ENCODE measurements at regions of chr7 and their contacts with region 1.

Region 1: GRCh38 chr7:100081535-100082102 is at the start of gene ZNF3:
- DNase-seq: peak; percentile 99
- ATAC-seq: peak; percentile 77
- H3K4me3 ChIP-seq: peak within 1 kb of the TSS; percentile 70 to 84 (median 79)
- H3K4me3 Mint-ChIP-seq: peak within 1 kb of the TSS; percentile 86
- H3K27ac ChIP-seq: peak within 1 kb of the TSS; percentile 81 to 91
- H3K27ac Mint-ChIP-seq: peak within 1 kb of the TSS; percentile 91
- H3K4me1 ChIP-seq: peaks cover 16 to 24% of the 10 kb centered on the region in 2 donors
- H3K4me1 Mint-ChIP-seq: peaks cover 32% of the 10 kb centered on the region
- H3K27me3 ChIP-seq: no peaks in the 10 kb centered on the region
- H3K27me3 Mint-ChIP-seq: no peaks in the 10 kb centered on the region
- CTCF ChIP-seq: peak; percentile 96
- total RNA-seq, gene ZNF3: 44.8 and 48.5 TPM in 2 replicates

Region 2: DNA sequence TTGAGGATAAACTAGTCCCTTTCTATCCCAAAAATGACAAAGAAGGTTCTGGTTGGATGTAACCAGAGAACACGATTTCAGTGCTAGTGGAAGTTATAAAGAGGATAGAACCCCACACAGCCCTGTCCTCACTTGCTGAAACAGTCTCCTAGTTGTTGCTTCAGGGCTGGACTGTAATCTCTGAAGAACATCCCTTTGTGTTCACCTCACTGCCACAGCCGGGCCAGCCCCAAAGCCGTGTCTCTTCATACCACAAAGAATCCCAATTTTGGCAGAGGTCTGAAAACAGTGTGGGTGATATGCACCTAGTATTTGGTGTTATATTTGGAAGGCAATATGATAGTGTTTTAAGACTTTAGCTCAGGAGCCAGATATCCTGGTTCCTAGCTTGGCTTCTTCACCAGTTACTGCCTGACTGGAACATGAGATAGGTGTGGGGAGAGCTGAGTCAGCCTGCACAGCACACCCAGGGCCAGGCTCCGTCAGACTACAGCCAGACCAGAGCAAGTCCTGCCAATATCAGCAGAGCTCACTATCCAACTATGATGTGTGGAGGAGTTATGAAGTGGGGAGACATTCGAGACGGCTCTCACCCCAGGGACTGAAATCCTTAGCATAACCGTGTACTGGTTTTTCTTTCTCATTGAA is 318.8 kb before region 1 on chr7:
- CTCF ChIA-PET with region 1: no interaction called
- POLR2A ChIA-PET with region 1: no interaction called
- intact Hi-C with region 1: no loop called
- DNase-seq: no peak
- ATAC-seq: no peak
- H3K4me3 ChIP-seq: no peak overlapping the region
- H3K4me3 Mint-ChIP-seq: no peak overlapping the region
- H3K27ac ChIP-seq: no peak overlapping the region
- H3K27ac Mint-ChIP-seq: no peak overlapping the region
- H3K4me1 ChIP-seq: peaks cover 6 to 8% of the 10 kb centered on the region in 2 donors
- H3K4me1 Mint-ChIP-seq: peaks cover 10% of the 10 kb centered on the region
- H3K27me3 ChIP-seq: peaks cover 0 to 58% (median 29%) of the 10 kb centered on the region in 4 experiments
- H3K27me3 Mint-ChIP-seq: peaks cover 68% of the 10 kb centered on the region
- CTCF ChIP-seq: no peak

Region 3: DNA sequence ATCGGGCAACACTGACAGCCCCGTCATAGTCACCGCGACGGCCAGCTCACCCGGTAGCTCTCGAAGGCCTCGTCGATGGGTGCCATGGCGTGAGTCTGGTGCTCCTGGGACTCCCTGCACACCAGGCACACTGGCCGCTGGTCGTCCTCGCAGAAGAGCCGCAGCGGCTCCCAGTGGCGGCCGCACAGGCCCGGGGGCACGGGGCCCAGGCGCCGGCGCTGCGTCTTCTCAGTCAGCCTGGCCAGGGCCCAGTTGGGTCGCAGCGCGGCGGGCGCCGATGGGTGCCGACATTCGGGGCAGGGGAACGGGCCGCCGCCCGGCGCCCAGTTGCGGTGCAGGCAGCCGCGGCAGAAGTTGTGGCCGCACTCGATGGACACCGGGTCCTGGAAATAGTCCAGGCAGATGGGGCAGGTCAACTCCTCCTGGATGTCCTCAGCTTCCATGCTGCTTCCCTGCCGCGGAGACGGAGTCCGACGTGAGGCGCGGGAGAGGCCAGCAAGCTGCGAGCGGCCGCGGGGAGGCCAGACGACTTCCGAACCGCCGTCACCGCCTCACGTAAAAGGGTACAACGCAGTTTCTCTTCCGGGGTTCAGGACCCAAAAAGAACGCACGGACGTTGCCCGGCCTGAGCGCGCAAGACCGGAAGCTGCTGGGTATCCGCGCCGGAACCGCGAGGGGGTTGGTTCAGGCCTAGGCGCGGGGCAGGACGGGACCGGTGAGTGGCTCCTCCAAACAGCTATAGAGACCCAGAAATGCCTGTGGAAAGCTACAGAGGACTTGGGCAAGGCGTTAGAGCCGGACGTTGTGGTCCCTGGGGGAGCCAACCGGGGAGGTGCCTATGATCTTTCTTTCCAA is 162.4 kb before region 1 on chr7 and contains the start of gene TRIM4:
- CTCF ChIA-PET with region 1: no interaction called
- POLR2A ChIA-PET with region 1: interaction called, 6 read pairs
- intact Hi-C with region 1: loop called (anchors 1 kb)
- DNase-seq: peak; percentile 92
- ATAC-seq: peak; percentile 97
- H3K4me3 ChIP-seq: peak within 1 kb of the TSS; percentile 65 to 89 (median 78)
- H3K4me3 Mint-ChIP-seq: peak within 1 kb of the TSS; percentile 96
- H3K27ac ChIP-seq: peak within 1 kb of the TSS; percentile 81 to 93
- H3K27ac Mint-ChIP-seq: peak within 1 kb of the TSS; percentile 97
- H3K4me1 ChIP-seq: peaks cover 32 to 35% of the 10 kb centered on the region in 2 donors
- H3K4me1 Mint-ChIP-seq: peaks cover 47% of the 10 kb centered on the region
- H3K27me3 ChIP-seq: no peaks in the 10 kb centered on the region
- H3K27me3 Mint-ChIP-seq: peaks cover 6% of the 10 kb centered on the region
- CTCF ChIP-seq: peak; percentile 21
- total RNA-seq, gene TRIM4: 56.7 and 58.1 TPM in 2 replicates

Region 4: DNA sequence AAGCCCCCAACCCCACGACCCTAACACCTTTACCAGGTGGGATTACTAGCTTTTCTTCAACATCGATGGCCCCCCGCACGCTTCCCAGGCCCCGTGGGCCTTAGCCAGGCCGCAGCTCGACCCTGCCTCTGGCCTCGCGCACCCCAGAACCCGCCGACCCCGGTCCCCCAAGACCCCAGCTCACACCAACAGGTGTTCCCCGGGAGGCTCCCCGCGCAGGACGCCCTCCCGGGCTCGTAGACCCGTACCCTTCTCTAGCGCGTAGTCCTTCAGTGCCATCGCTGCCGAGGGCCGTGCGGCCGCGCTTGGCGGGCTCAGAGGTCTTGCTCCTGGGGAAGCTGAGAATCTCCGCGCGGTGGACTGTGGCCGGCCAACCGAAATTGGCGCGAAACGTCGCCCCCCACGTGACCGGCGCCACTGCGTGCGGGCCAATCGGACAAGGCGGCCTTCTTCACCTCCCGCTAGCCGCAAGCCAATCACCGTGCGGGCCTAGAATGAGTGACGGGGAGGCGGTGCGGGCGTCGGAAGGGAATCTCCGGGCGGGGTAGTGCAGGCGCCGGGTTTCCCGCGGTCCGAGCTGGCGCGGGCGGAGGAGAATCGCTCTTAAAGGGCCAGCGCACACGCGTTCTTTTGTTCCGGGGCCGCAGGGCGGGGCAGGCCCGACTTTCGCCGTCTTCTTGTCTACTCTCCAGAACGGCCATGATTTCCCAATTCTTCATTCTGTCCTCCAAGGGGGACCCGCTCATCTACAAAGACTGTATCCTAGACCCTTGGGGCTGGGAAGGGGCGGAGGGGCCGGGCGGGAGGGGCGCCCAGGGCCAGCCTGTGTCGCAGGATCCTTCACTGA is 19.6 kb after region 1 on chr7 and contains the starts of genes AP4M1 and MCM7:
- CTCF ChIA-PET with region 1: interaction called, 19 read pairs
- POLR2A ChIA-PET with region 1: interaction called, 19 read pairs
- intact Hi-C with region 1: loop called (anchors 1 kb)
- DNase-seq: peak; percentile 97
- ATAC-seq: peak; percentile 86
- H3K4me3 ChIP-seq: peak within 1 kb of the TSS; percentile 85 to 92 (median 90)
- H3K4me3 Mint-ChIP-seq: peak within 1 kb of the TSS; percentile 96
- H3K27ac ChIP-seq: peak within 1 kb of the TSS; percentile 60 to 94
- H3K27ac Mint-ChIP-seq: peak within 1 kb of the TSS; percentile 98
- H3K4me1 ChIP-seq: peaks cover 13 to 24% of the 10 kb centered on the region in 2 donors
- H3K4me1 Mint-ChIP-seq: peaks cover 40% of the 10 kb centered on the region
- H3K27me3 ChIP-seq: no peaks in the 10 kb centered on the region
- H3K27me3 Mint-ChIP-seq: no peaks in the 10 kb centered on the region
- CTCF ChIP-seq: no peak
- total RNA-seq, gene AP4M1: 17.6 and 18.3 TPM in 2 replicates
- total RNA-seq, gene MCM7: 147 and 154 TPM in 2 replicates

Region 5: GRCh38 chr7:100137851-100138760 is 56.5 kb after region 1 on chr7:
- CTCF ChIA-PET with region 1: no interaction called
- POLR2A ChIA-PET with region 1: no interaction called
- intact Hi-C with region 1: no loop called
- DNase-seq: peak; percentile 55
- ATAC-seq: peak; percentile 61
- H3K4me3 ChIP-seq: peak overlapping the region in 2 of 5 experiments; percentile 15 to 20
- H3K4me3 Mint-ChIP-seq: peak overlapping the region; percentile 72
- H3K27ac ChIP-seq: peak overlapping the region in 1 of 2 donors; percentile 63
- H3K27ac Mint-ChIP-seq: peak overlapping the region; percentile 88
- H3K4me1 ChIP-seq: peaks cover 10 to 25% of the 10 kb centered on the region in 2 donors
- H3K4me1 Mint-ChIP-seq: peaks cover 18% of the 10 kb centered on the region
- H3K27me3 ChIP-seq: no peaks in the 10 kb centered on the region
- H3K27me3 Mint-ChIP-seq: no peaks in the 10 kb centered on the region
- CTCF ChIP-seq: no peak

Region 6: DNA sequence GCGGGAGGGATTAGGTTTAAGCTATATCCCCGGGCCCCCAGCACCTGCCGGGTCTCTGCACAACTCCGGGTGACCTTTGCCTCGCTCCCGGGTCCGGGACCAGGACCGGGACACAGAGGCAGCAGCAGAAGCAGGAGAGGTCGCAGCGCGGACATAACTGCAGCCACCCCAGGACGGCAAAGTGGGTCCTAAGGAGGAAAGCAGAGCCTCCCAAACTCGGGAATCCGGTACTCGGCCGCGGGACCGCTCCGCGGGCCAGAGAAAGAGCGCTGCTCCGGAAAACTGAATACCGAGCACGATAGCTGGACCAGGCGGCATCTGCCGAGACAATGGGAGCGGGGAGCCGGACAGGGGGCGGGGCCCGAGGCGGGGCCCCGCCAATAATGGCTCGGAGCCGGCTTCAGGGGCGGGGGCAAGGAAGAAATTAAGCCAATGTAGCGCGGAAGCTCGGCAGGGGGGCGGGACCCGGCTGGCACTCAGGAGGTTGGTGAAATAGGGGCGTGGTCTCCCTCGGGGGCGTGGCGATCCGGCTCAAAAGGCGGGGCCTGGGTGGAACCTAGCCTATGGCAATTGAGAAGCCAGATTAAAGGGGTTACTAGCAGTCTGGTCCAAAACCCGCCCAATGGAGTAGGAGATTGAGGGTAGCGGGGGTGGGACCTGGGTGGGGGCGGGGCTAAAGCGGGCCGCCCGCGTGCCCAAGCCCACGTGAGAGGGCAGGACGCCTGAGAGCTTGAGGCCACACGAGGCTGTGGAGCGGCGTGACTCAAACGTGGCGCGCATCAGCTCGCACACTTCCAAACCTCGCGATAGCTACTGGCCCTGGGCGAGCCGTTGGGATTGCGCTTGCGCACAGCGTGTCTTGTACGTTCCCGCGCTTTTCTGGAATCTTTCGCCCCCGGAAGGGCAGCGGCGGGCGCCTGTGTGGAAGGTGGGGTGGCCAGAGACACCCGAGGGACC is 95.7 kb after region 1 on chr7 and contains the starts of genes GPC2 and STAG3:
- CTCF ChIA-PET with region 1: no interaction called
- POLR2A ChIA-PET with region 1: no interaction called
- intact Hi-C with region 1: loop called (anchors 1 kb)
- DNase-seq: peak; percentile 97
- ATAC-seq: peak; percentile 94
- H3K4me3 ChIP-seq: peak within 1 kb of the TSS; percentile 64 to 78 (median 70)
- H3K4me3 Mint-ChIP-seq: peak within 1 kb of the TSS; percentile 73
- H3K27ac ChIP-seq: peak within 1 kb of the TSS in 1 of 2 donors; percentile 39
- H3K27ac Mint-ChIP-seq: peak within 1 kb of the TSS; percentile 27
- H3K4me1 ChIP-seq: peaks cover 11 to 22% of the 10 kb centered on the region in 2 donors
- H3K4me1 Mint-ChIP-seq: peaks cover 26% of the 10 kb centered on the region
- H3K27me3 ChIP-seq: no peaks in the 10 kb centered on the region
- H3K27me3 Mint-ChIP-seq: no peaks in the 10 kb centered on the region
- CTCF ChIP-seq: no peak
- total RNA-seq, gene GPC2: 4.1 and 6.1 TPM in 2 replicates
- total RNA-seq, gene STAG3: 22.0 and 24.8 TPM in 2 replicates

Region 7: GRCh38 chr7:100586266-100587025 is 504.8 kb after region 1 on chr7 and contains the start of gene FBXO24:
- CTCF ChIA-PET with region 1: no interaction called
- POLR2A ChIA-PET with region 1: interaction called, 3 read pairs
- intact Hi-C with region 1: loop called (anchors 5 kb)
- DNase-seq: peak; percentile 100
- ATAC-seq: peak; percentile 79
- H3K4me3 ChIP-seq: peak within 1 kb of the TSS; percentile 82 to 93 (median 85)
- H3K4me3 Mint-ChIP-seq: peak within 1 kb of the TSS; percentile 98
- H3K27ac ChIP-seq: peak within 1 kb of the TSS; percentile 94 to 97
- H3K27ac Mint-ChIP-seq: peak within 1 kb of the TSS; percentile 99
- H3K4me1 ChIP-seq: peaks cover 27 to 38% of the 10 kb centered on the region in 2 donors
- H3K4me1 Mint-ChIP-seq: peaks cover 44% of the 10 kb centered on the region
- H3K27me3 ChIP-seq: peaks cover 0 to 14% (median 5%) of the 10 kb centered on the region in 4 experiments
- H3K27me3 Mint-ChIP-seq: peaks cover 9% of the 10 kb centered on the region
- CTCF ChIP-seq: no peak
- total RNA-seq, gene FBXO24: 1.6 and 2.2 TPM in 2 replicates